ENCODE measurements at regions of chr3 and their contacts with region 1.

Region 1: GRCh38 chr3:124905849-124906248 is 18.7 kb upstream of the ITGB5 start:
- DNase-seq: no peak

Region 2: DNA sequence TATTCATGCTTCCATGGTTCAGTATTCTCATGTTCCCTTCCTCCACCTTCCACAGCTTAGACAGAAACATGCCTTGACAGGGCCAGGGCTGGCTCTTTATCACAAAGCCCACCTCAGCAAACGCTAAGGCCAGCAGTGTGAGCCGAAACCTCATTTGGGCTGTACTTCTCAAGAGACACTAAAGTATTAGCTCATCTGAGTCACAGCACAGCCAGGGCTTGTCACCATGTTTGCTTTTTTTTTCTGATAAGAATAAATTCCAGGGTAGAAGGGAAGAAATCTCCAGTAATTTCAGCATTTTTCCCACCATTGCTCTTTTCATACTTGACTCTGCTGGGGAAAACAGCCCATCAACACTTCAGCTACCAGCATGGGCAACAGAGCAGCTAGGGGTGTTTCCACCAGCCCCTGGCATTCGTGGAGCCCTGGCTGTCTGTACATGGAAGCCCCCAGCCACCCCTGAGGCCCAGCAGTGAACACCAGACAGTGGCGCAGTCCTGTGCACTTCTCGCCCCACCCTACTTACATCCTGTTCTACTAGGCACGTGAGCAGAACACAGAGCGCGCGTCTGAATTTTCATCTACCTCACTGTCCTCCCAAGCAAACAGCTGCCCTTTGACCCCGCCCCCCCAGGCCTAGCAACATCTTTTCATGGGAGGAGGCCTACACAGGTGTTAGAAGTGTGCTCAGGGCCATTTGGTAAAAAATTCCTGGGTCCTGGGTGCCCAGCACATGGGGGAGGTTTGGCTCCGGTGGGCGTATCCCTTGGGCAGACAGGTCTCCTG is 1116.9 kb before region 1 on chr3:
- in situ Hi-C with region 1: no loop called
- DNase-seq: no peak

Region 3: DNA sequence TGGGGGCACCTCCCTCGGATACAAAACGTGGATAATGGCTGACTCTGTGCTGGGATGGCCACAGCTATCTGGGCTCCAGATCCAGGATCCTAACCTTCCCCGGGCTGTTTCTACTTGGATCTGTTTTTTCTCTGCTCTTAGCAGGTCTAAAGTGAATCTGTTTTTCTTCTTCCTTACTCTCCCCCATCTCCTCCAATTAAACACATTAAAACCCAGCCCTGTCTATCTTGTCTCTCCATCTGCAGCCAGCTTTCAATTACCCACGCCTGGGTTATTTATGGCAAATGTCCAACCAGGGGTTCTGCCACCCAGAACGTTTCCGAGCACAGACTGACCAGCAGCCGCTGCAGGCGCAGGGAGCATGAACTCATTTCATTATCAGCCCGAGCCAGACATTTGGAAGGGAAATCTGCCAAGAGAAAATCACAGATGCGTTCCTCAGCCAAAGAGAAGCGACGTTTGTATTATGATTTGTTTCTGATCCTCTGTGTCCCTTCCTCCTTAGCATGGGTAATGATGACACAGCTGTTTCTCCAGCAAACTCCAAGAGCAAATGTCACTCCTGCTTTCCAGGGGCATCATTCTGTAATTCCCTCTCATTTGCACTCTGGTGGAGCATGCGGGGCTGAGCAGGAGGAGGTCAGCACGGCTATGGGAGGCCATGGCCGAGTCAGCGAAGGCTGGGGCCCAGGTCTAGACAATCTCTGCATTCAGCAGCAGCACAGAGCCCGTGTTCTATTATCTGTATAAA is 133.6 kb before region 1 on chr3:
- in situ Hi-C with region 1: loop called (anchors 10 kb)
- DNase-seq: peak; percentile 68

Measured in KBM-7 (cell line).